CD8-positive, alpha-beta memory T cell (primary cell): ENCODE measurements at regions of chr17 and their contacts with region 1.

Region 1: DNA sequence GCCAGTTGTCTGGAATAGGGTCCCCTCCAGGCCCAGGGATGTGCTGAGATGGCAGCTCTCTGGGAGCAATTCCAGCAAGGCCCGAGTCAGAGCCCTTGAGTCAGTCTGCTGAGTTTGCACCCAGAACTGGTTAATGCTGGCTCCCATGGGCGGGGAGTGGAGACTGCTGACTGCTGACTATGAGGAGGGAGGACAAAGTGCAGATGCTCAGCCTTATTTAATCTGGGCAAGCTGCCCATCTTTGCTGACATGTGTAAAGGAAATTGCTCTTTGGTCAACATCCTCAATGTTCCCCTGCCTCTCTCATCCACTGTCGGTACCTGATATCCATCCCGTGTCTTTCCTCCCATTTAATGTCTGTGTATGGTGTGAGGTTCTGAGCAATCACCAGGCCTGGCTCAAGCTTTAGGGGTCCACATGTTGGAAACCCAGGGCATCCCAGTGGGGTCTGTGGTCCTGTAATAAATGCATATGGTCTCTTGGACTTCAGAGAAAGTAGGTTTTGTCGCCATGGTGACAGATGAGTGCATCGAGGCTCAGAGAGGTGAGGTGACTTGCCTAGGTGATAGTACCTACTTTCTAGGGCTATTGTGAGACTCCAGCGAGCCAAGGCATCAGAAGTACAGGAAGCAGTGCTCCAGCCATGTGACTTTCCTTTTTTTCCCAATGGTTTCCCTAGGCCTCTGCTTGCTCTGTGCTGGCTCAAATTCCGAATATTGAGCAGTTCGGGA is 20.0 kb upstream of the RNF135 start:
- DNase-seq: peak in 1 of 5 donors; percentile 22
- H3K4me3 ChIP-seq: no peak overlapping the region
- H3K4me3 Mint-ChIP-seq: no peak overlapping the region
- H3K27ac ChIP-seq: no peak overlapping the region
- H3K27ac Mint-ChIP-seq: no peak overlapping the region
- H3K4me1 ChIP-seq: no peaks in the 10 kb centered on the region
- H3K4me1 Mint-ChIP-seq: no peaks in the 10 kb centered on the region
- H3K27me3 ChIP-seq: no peaks in the 10 kb centered on the region
- H3K27me3 Mint-ChIP-seq: no peaks in the 10 kb centered on the region

Region 2: GRCh38 chr17:30341703-30342249 is 609.1 kb before region 1 on chr17:
- CTCF ChIA-PET with region 1: no interaction called
- POLR2A ChIA-PET with region 1: interaction called, 18 read pairs
- DNase-seq: no peak
- H3K4me3 ChIP-seq: no peak overlapping the region
- H3K4me3 Mint-ChIP-seq: no peak overlapping the region
- H3K27ac ChIP-seq: no peak overlapping the region
- H3K27ac Mint-ChIP-seq: peak overlapping the region in 1 of 8 donors; percentile 56
- H3K4me1 ChIP-seq: no peaks in the 10 kb centered on the region
- H3K4me1 Mint-ChIP-seq: peaks cover 7 to 15% (median 8%) of the 10 kb centered on the region in 3 donors
- H3K27me3 ChIP-seq: no peaks in the 10 kb centered on the region
- H3K27me3 Mint-ChIP-seq: no peaks in the 10 kb centered on the region